ENCODE measurements at regions of chr3 and their contacts with region 1.

Region 1: GRCh38 chr3:64595253-64595694 is 92.5 kb downstream of the ADAMTS9 start:
- DNase-seq: peak; percentile 11
- H3K4me3 ChIP-seq: no peak overlapping the region
- H3K27ac ChIP-seq: no peak overlapping the region
- H3K4me1 ChIP-seq: no peaks in the 10 kb centered on the region
- H3K27me3 ChIP-seq: no peaks in the 10 kb centered on the region
- CTCF ChIP-seq: no peak

Region 2: DNA sequence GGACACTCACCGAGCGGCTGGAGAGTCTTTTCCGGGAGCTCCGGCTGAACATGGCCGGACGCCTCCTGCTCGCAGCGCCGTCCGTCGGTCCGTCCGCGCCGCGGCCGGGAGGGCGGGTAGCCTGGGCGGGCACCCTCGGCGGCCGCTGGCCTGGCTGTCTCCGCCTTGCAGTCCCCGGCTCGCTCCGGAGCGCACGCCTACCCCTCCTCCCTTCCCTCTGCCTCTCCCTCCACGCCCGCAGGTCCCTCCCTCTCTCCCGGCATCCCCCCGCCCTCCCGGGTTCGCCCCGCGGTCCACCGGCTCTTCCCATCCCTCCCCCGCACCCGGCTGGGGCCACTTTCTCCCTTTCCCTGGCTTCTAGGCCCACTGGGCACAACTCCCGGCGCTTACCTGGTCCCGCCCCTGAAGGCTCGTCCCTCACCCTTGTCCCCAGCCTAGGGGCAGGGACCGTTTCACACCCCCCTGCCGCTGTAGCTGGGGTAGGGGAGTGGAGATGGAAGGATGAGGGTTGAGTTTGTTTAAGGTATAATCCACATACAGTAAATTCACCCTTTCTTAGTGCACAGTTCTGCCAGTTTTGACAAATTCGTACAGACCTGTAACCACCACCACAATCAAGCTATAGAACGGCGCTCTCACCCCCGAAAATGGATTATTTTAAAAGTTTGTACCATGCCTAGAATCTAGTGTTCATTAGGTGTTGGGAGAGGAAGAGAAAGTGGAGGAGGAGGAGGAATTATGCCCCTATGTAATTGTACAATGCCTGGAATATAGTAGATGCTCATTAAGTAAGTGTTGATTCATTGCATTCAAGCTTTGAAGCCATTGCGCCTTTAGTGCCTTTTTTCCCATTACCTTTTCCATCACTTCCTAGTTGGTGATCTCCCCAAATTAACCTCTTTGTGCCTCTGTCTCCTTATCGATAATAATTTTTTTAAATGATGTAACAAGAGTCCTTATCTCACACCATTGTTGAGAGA is 149.7 kb before region 1 on chr3:
- dilution Hi-C with region 1: no loop called
- DNase-seq: no peak
- H3K4me3 ChIP-seq: peak overlapping the region; percentile 35 to 59 (median 52)
- H3K27ac ChIP-seq: no peak overlapping the region
- H3K4me1 ChIP-seq: peaks cover 4% of the 10 kb centered on the region
- H3K27me3 ChIP-seq: peaks cover 31% of the 10 kb centered on the region
- CTCF ChIP-seq: no peak

Region 3: GRCh38 chr3:64561325-64561843 is 33.9 kb before region 1 on chr3:
- dilution Hi-C with region 1: loop called (anchors 5 kb)
- DNase-seq: no peak
- H3K4me3 ChIP-seq: no peak overlapping the region
- H3K27ac ChIP-seq: no peak overlapping the region
- H3K4me1 ChIP-seq: no peaks in the 10 kb centered on the region
- H3K27me3 ChIP-seq: no peaks in the 10 kb centered on the region
- CTCF ChIP-seq: no peak